ENCODE measurements at regions of chr6 and their contacts with region 1.

Region 1: DNA sequence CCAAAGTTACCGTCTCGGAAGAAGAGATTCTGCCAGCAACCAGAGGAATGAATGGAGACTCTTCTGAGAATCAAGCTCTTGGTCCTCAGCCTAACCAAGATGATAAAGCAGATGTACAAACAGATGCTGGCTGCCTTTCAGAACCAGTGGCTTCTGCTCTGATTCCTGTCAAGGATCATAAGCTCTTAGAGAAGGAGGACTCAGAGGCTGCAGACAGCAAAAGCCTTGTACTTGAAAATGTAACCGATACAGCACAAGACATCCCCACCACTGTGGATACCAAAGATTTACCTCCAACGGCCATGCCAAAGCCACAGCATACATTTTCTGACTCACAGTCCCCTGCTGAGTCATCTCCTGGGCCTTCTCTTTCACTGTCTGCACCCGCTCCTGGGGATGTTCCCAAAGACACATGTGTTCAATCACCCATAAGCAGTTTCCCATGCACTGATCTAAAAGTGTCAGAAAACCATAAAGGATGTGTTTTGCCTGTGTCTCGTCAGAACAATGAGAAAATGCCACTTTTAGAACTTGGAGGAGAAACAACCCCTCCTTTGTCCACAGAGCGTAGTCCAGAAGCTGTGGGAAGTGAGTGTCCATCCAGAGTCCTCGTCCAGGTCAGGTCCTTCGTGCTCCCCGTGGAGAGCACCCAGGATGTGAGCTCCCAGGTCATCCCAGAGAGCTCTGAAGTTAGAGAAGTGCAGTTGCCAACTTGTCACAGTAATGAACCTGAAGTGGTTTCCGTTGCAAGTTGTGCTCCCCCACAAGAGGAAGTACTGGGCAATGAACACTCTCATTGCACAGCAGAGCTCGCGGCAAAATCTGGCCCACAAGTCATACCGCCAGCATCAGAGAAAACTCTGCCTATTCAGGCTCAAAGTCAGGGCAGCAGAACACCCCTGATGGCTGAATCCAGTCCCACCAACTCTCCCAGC is 109.6 kb downstream of the RTN4IP1 start:
- DNase-seq: peak; percentile 93
- H3K4me3 Mint-ChIP-seq: peak overlapping the region; percentile 77
- H3K27ac Mint-ChIP-seq: peak overlapping the region; percentile 99
- H3K4me1 Mint-ChIP-seq: peaks cover 71% of the 10 kb centered on the region
- H3K27me3 Mint-ChIP-seq: no peaks in the 10 kb centered on the region

Region 2: GRCh38 chr6:105992315-105992961 is 527.3 kb before region 1 on chr6:
- CTCF ChIA-PET with region 1: no interaction called
- intact Hi-C with region 1: loop called (anchors 2 kb)
- DNase-seq: peak; percentile 90
- H3K4me3 Mint-ChIP-seq: peak overlapping the region; percentile 88
- H3K27ac Mint-ChIP-seq: peak overlapping the region; percentile 74
- H3K4me1 Mint-ChIP-seq: peaks cover 22% of the 10 kb centered on the region
- H3K27me3 Mint-ChIP-seq: peaks cover 72% of the 10 kb centered on the region

Region 3: GRCh38 chr6:106173124-106173879 is 346.4 kb before region 1 on chr6:
- CTCF ChIA-PET with region 1: no interaction called
- intact Hi-C with region 1: no loop called
- DNase-seq: no peak
- H3K4me3 Mint-ChIP-seq: no peak overlapping the region
- H3K27ac Mint-ChIP-seq: no peak overlapping the region
- H3K4me1 Mint-ChIP-seq: peaks cover 21% of the 10 kb centered on the region
- H3K27me3 Mint-ChIP-seq: no peaks in the 10 kb centered on the region

Region 4: DNA sequence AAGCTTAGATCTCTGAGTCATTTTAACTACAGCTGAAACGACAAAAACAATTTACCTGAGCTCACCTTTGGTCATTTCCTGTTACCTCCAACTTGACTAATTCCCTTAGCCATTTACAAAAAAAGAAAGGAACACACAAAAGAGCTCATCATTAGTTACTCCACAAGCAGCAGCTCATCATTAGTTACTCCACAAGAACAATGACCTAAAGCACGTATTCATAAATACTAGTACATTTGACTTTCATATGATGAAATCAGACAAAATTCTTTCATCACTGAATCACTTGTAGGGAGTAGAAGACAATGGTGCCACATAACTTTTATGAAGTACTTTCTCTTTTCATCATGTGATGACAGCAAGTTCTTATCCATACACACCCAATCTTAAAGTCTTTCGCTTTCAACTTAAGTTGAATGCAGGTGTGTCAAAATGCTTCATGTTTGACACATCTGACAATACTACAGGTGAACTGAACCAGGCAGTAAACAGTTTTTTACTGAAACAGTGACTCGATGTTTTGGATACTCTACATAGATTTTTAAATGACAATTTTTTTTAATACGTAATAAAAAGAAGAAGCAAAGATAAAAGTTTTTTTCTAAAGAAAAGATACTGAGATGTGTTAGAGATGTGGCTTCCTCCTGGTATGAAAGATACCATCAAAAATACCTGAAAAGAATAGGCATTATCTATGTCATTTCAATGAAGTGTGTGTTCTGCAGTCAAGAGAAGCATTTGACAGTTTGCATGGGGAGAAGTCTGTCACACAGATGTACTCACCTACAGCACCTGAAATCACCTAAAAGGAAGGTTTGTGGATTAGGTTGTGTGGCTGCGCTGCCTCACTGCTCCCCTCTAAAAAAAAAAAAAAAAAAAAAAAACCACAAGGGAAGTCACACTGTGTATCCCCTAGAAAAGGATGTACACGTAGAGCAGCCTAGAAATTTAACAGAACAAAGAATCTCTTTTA is 324.5 kb before region 1 on chr6:
- CTCF ChIA-PET with region 1: no interaction called
- intact Hi-C with region 1: loop called (anchors 5 kb)
- DNase-seq: no peak
- H3K4me3 Mint-ChIP-seq: peak overlapping the region; percentile 59
- H3K27ac Mint-ChIP-seq: peak overlapping the region; percentile 88
- H3K4me1 Mint-ChIP-seq: peaks cover 38% of the 10 kb centered on the region
- H3K27me3 Mint-ChIP-seq: no peaks in the 10 kb centered on the region

Region 5: GRCh38 chr6:106546691-106547414 is 27.1 kb after region 1 on chr6:
- CTCF ChIA-PET with region 1: interaction called, 8 read pairs
- intact Hi-C with region 1: loop called (anchors 1 kb)
- DNase-seq: peak; percentile 39
- H3K4me3 Mint-ChIP-seq: no peak overlapping the region
- H3K27ac Mint-ChIP-seq: peak overlapping the region; percentile 78
- H3K4me1 Mint-ChIP-seq: peaks cover 37% of the 10 kb centered on the region
- H3K27me3 Mint-ChIP-seq: no peaks in the 10 kb centered on the region

Region 6: DNA sequence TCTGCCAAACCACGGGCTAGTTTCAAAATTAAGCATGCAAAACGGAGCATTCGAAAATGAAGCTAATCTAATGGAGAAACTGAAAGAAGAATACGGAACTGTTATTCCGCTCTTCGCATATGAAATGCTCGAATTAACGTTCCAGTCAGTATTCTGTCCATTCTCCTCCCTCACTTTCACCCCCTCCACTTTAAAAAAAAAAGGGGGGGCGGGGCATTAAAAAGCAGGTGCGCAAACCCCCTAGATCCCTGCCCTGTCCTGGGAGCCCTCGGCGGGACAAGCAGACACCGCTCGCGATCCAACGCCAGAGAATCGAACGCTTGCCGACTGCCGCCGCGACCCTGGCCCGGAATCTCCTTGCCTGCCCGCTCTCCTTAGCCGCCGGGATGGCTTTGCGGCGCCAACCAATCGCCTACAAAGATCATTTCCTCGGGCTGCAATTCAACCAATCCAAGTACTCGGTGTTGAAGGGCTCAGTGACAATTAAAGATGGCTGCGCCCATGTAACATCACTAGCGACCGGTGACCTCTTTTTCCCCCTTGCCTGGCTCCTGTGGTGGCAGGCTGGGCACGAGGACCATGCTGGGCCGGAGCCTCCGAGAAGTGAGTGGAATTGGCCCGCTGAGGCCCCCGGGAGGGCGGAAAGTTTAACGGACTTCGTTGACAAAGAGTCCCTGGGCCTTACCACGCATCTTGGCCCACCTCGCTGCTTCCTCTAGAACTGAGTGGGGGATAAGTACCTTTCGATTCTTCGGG is 109.6 kb after region 1 on chr6 and contains the starts of genes QRSL1 and RTN4IP1:
- CTCF ChIA-PET with region 1: no interaction called
- intact Hi-C with region 1: loop called (anchors 1 kb)
- DNase-seq: peak; percentile 92
- H3K4me3 Mint-ChIP-seq: peak within 1 kb of the TSS; percentile 98
- H3K27ac Mint-ChIP-seq: peak within 1 kb of the TSS; percentile 98
- H3K4me1 Mint-ChIP-seq: peaks cover 32% of the 10 kb centered on the region
- H3K27me3 Mint-ChIP-seq: no peaks in the 10 kb centered on the region
- total RNA-seq, gene QRSL1: 19.6 to 21.6 TPM
- total RNA-seq, gene RTN4IP1: 5.5 to 6.0 TPM

Region 7: DNA sequence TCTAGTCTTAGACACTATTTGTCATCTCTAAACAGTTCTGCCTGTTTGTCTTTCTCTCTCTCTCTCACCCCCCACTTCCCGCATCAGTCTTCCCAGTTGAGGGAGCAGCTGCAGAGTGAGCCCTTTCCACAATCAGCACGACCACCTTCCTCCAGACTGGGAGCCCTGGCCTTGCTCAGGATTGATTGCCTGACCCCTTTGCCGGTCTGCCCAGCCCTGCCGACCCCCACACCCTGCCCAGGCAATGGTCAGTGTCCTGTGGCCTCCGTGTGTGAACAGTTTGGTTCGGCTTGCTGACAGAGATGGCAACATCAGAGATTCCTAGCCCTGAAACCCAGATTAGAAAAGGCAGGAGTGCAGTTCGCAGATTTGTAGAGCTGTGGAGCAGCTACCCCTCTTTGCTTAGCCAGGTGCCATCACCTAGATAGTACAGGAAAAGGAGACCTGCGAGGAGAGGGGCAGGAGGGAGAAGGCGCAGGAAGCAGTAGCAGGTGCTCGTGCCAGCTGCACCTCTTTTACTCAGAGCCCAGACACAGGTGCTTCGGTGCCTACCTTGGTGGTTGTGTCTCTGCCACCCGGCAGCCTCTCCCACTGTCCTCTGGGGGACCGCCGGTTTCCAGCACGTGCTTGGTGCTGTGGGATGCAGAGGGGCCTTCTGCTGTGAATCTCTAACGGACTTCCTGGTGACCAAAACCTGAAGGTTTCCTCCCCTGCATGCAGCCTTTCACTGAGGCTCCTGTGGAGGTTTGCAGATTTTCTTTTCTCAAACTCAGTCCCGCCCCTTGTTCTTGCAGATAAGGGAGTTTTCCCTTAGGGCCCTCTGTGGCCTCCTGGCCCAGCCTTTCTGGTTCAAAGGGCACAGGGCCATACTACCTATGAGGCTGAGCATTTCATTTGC is 1211.9 kb after region 1 on chr6:
- CTCF ChIA-PET with region 1: no interaction called
- intact Hi-C with region 1: loop called (anchors 5 kb)
- DNase-seq: peak; percentile 43
- H3K4me3 Mint-ChIP-seq: peak overlapping the region; percentile 80
- H3K27ac Mint-ChIP-seq: peak overlapping the region; percentile 86
- H3K4me1 Mint-ChIP-seq: peaks cover 74% of the 10 kb centered on the region
- H3K27me3 Mint-ChIP-seq: no peaks in the 10 kb centered on the region

Region 8: GRCh38 chr6:108260809-108261569 is 1741.3 kb after region 1 on chr6 and contains the start of gene SNX3:
- CTCF ChIA-PET with region 1: no interaction called
- intact Hi-C with region 1: loop called (anchors 5 kb)
- DNase-seq: peak; percentile 90
- H3K4me3 Mint-ChIP-seq: peak within 1 kb of the TSS; percentile 77
- H3K27ac Mint-ChIP-seq: peak within 1 kb of the TSS; percentile 89
- H3K4me1 Mint-ChIP-seq: peaks cover 19% of the 10 kb centered on the region
- H3K27me3 Mint-ChIP-seq: no peaks in the 10 kb centered on the region
- total RNA-seq, gene SNX3: 59.9 to 65.7 TPM